Activated B cell treated with CpG ODN at 0.5 μM for 24 hours (primary cell): ENCODE measurements at regions of chr1 and their contacts with region 1.

Region 1: GRCh38 chr1:226736908-226737818 is 1.9 kb downstream of the ITPKB start:
- DNase-seq: peak; percentile 51
- ATAC-seq: peak; percentile 44
- H3K4me3 Mint-ChIP-seq: peak overlapping the region; percentile 93
- H3K27ac Mint-ChIP-seq: peak overlapping the region; percentile 86
- H3K4me1 Mint-ChIP-seq: peaks cover 68% of the 10 kb centered on the region
- H3K27me3 Mint-ChIP-seq: no peaks in the 10 kb centered on the region
- CTCF ChIP-seq: no peak

Region 2: DNA sequence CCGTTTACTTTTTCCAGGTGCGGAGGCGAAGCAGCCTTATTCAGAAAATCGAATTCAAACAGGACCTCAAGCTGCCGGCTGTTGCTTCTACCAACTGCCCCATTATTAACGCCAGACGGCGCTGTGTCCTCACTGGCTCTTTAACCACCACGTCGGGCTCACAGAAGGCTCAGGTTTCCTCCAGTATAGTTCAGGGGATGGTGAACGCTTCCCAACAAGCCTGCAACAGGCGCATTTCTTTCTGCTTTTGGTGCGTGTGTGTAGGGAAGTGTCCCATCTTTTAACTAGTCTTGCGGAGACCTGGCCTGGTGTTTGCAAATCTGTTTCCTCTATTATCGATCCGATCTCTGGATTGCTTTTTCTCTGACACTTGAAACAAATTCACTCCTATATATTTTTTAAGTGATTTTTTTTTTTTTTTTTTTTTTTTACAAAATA is 189.4 kb before region 1 on chr1:
- CTCF ChIA-PET with region 1: no interaction called
- POLR2A ChIA-PET with region 1: no interaction called
- intact Hi-C with region 1: loop called (anchors 10 kb)
- DNase-seq: peak; percentile 52
- ATAC-seq: peak; percentile 71
- H3K4me3 Mint-ChIP-seq: peak overlapping the region; percentile 28
- H3K27ac Mint-ChIP-seq: no peak overlapping the region
- H3K4me1 Mint-ChIP-seq: peaks cover 21% of the 10 kb centered on the region
- H3K27me3 Mint-ChIP-seq: peaks cover 21% of the 10 kb centered on the region
- CTCF ChIP-seq: peak; percentile 50

Region 3: GRCh38 chr1:226649780-226650179 is 87.4 kb before region 1 on chr1:
- CTCF ChIA-PET with region 1: no interaction called
- POLR2A ChIA-PET with region 1: interaction called, 33 read pairs
- intact Hi-C with region 1: loop called (anchors 1 kb)
- DNase-seq: no peak
- ATAC-seq: no peak
- H3K4me3 Mint-ChIP-seq: no peak overlapping the region
- H3K27ac Mint-ChIP-seq: peak overlapping the region; percentile 11
- H3K4me1 Mint-ChIP-seq: peaks cover 43% of the 10 kb centered on the region
- H3K27me3 Mint-ChIP-seq: no peaks in the 10 kb centered on the region
- CTCF ChIP-seq: no peak

Region 4: GRCh38 chr1:226687426-226687825 is 49.7 kb before region 1 on chr1:
- CTCF ChIA-PET with region 1: interaction called, 5 read pairs
- POLR2A ChIA-PET with region 1: interaction called, 17 read pairs
- intact Hi-C with region 1: no loop called
- DNase-seq: no peak
- ATAC-seq: peak; percentile 12
- H3K4me3 Mint-ChIP-seq: peak overlapping the region; percentile 61
- H3K27ac Mint-ChIP-seq: peak overlapping the region; percentile 91
- H3K4me1 Mint-ChIP-seq: peaks cover 100% of the 10 kb centered on the region
- H3K27me3 Mint-ChIP-seq: no peaks in the 10 kb centered on the region
- CTCF ChIP-seq: no peak

Region 5: GRCh38 chr1:226708342-226708780 is 28.8 kb before region 1 on chr1:
- CTCF ChIA-PET with region 1: interaction called, 3 read pairs
- POLR2A ChIA-PET with region 1: interaction called, 19 read pairs
- intact Hi-C with region 1: loop called (anchors 1 kb)
- DNase-seq: no peak
- ATAC-seq: no peak
- H3K4me3 Mint-ChIP-seq: no peak overlapping the region
- H3K27ac Mint-ChIP-seq: peak overlapping the region; percentile 76
- H3K4me1 Mint-ChIP-seq: peaks cover 85% of the 10 kb centered on the region
- H3K27me3 Mint-ChIP-seq: no peaks in the 10 kb centered on the region
- CTCF ChIP-seq: no peak

Region 6: DNA sequence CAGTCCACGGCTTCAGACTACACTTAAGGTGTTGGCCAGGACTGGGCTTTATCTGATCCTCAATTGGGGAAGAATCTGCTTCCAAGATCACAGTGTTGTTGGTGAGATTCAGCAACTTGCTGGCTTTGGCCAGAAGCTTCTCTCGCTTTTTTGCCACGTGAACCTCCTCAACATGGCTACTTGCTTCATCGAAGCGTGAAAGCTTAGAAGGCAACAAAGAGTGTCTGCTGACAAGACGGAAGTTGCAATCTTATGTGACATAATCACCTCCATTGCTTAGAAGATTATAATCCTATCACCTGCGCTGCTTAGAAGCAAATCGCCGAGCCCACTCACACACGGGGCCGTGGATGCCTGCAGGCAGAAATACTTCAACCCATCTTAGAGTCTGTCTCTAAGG is 12.3 kb after region 1 on chr1:
- CTCF ChIA-PET with region 1: interaction called, 3 read pairs
- POLR2A ChIA-PET with region 1: interaction called, 13 read pairs
- intact Hi-C with region 1: no loop called
- DNase-seq: no peak
- ATAC-seq: peak; percentile 66
- H3K4me3 Mint-ChIP-seq: no peak overlapping the region
- H3K27ac Mint-ChIP-seq: peak overlapping the region; percentile 62
- H3K4me1 Mint-ChIP-seq: peaks cover 21% of the 10 kb centered on the region
- H3K27me3 Mint-ChIP-seq: no peaks in the 10 kb centered on the region
- CTCF ChIP-seq: no peak

Region 7: GRCh38 chr1:226761322-226761721 is 24.2 kb after region 1 on chr1:
- CTCF ChIA-PET with region 1: no interaction called
- POLR2A ChIA-PET with region 1: no interaction called
- intact Hi-C with region 1: no loop called
- DNase-seq: no peak
- ATAC-seq: no peak
- H3K4me3 Mint-ChIP-seq: no peak overlapping the region
- H3K27ac Mint-ChIP-seq: no peak overlapping the region
- H3K4me1 Mint-ChIP-seq: peaks cover 2% of the 10 kb centered on the region
- H3K27me3 Mint-ChIP-seq: peaks cover 15% of the 10 kb centered on the region
- CTCF ChIP-seq: no peak

Region 8: GRCh38 chr1:227043755-227044154 is 306.6 kb after region 1 on chr1:
- CTCF ChIA-PET with region 1: no interaction called
- POLR2A ChIA-PET with region 1: no interaction called
- intact Hi-C with region 1: no loop called
- DNase-seq: no peak
- ATAC-seq: no peak
- H3K4me3 Mint-ChIP-seq: no peak overlapping the region
- H3K27ac Mint-ChIP-seq: no peak overlapping the region
- H3K4me1 Mint-ChIP-seq: no peaks in the 10 kb centered on the region
- H3K27me3 Mint-ChIP-seq: peaks cover 9% of the 10 kb centered on the region
- CTCF ChIP-seq: no peak